CD14-positive monocyte (primary cell): ENCODE measurements at regions of chr13 and their contacts with region 1.

Region 1: DNA sequence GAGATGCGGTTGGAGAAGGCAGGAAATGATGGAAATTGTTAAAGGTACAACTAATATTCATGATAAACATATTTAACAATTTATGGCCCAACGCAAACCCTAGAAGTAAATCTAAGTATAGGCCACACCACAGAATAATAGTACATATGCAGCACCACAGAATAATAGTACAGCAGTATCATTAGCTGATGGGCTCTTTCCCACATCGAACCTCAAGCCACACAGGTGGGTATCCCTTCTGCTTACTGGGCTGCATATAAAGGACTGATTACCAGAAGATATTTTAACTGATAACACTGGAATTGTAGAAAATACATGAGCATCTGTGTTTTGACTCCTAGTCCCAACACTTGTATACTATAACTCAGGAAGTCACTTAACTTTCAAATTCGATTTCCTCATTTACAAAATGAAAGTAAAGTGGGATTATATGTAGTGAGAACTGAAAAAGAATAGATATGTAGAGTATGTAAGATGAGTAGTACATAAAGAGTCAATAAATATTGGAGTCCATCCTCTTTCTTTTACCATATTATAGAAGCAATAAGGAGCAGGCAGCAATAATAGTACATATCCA is 91.5 kb downstream of the TSC22D1 start:
- DNase-seq: peak in 1 of 3 donors; percentile 16
- H3K4me3 ChIP-seq: peak overlapping the region in 1 of 3 experiments; percentile 34
- H3K4me3 Mint-ChIP-seq: peak overlapping the region; percentile 7 to 39
- H3K27ac ChIP-seq: peak overlapping the region in 1 of 2 donors; percentile 44
- H3K27ac Mint-ChIP-seq: peak overlapping the region in 2 of 7 donors; percentile 17 to 46
- H3K4me1 ChIP-seq: peaks cover 6 to 13% of the 10 kb centered on the region in 2 donors
- H3K4me1 Mint-ChIP-seq: peaks cover 10% of the 10 kb centered on the region
- H3K27me3 ChIP-seq: no peaks in the 10 kb centered on the region
- H3K27me3 Mint-ChIP-seq: no peaks in the 10 kb centered on the region
- CTCF ChIP-seq: no peak

Region 2: DNA sequence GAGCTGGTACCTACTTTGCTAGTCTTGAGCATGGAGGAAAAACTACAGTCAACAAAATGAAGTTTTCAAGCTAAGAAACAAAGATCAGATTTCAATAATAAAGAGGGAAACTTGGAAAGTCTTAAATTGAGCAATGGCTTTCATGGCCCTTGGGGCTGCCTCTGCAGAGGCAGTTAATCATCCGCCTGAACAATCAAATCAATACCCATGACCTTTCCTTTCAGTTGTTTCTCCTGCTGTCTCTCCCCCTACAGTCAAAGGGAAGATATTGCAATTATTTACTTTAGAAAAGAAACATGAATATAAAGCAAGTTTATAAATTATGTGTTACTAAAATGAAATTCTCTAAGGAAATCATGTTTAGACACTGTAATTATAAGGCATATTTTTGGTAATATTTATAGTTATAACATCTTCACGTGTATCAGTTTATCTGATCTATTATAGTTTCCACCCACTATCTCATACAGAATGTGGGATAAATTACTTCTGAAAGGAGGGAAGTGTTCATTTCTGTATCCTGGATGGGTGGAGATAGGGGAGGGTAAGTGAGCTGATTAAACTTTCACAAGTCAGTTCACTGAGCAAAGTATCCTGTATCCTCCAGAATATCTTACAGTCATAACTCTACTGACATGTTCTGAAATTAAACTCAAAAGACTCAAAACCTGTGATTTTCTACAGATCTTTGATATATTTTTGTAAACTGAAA is 163.9 kb after region 1 on chr13:
- intact Hi-C with region 1: loop called in 1 of 2 experiments (anchors 10 kb)
- DNase-seq: no peak
- H3K4me3 ChIP-seq: no peak overlapping the region
- H3K4me3 Mint-ChIP-seq: no peak overlapping the region
- H3K27ac ChIP-seq: no peak overlapping the region
- H3K27ac Mint-ChIP-seq: no peak overlapping the region
- H3K4me1 ChIP-seq: no peaks in the 10 kb centered on the region
- H3K4me1 Mint-ChIP-seq: no peaks in the 10 kb centered on the region
- H3K27me3 ChIP-seq: no peaks in the 10 kb centered on the region
- H3K27me3 Mint-ChIP-seq: peaks cover 0 to 13% (median 3%) of the 10 kb centered on the region in 3 donors
- CTCF ChIP-seq: peak; percentile 38

Region 3: GRCh38 chr13:44969551-44970484 is 485.2 kb after region 1 on chr13:
- intact Hi-C with region 1: loop called (anchors 5 kb)
- DNase-seq: peak in 2 of 3 donors; percentile 10 to 28
- H3K4me3 ChIP-seq: no peak overlapping the region
- H3K4me3 Mint-ChIP-seq: no peak overlapping the region
- H3K27ac ChIP-seq: no peak overlapping the region
- H3K27ac Mint-ChIP-seq: no peak overlapping the region
- H3K4me1 ChIP-seq: peaks cover 8 to 15% of the 10 kb centered on the region in 2 donors
- H3K4me1 Mint-ChIP-seq: no peaks in the 10 kb centered on the region
- H3K27me3 ChIP-seq: no peaks in the 10 kb centered on the region
- H3K27me3 Mint-ChIP-seq: no peaks in the 10 kb centered on the region
- CTCF ChIP-seq: peak; percentile 73